Right cardiac atrium (tissue), 5 donors: ENCODE measurements at regions of chr2 and their contacts with region 1.

Region 1: DNA sequence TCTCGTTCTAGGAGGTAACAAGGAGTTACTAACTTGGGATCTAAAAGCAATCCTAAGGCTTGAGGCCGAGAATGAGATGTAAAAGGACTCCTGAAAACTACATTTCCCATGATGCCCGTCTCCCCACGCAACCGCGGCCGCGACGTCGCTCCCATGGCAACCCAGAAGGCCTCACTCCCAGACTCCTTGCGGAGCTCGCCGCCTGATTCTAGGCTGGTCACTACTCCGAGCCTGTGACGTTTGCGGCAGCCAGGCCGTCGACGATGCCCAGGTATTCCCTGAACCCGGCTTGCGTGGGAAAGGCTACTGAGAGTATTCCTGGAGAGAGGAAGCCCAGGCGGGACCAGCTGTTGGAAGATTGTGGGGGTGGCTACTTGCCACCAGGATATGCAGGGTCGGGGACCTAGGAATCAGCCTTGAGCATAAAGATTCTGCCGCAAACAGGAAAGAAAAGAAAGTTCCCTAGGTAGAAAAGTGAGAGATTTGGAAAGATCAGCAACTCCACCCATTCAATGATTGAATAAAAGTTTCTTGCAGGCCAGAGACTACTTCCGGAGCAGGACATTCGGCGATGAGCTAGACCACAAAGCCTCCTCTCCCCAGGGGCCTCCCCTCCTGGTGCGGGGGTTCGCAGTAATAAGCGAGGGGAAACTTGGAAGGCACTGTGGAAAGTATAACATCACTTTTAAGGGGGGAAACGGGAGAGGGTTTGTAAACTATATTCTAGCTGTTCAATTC is at the start of gene DYNC2LI1:
- DNase-seq: peak; percentile 83 to 96 (median 95)
- ATAC-seq: peak; percentile 99
- H3K4me3 ChIP-seq: peak within 1 kb of the TSS; percentile 99
- H3K27ac ChIP-seq: peak within 1 kb of the TSS; percentile 94
- H3K4me1 ChIP-seq: peaks cover 4% of the 10 kb centered on the region
- H3K27me3 ChIP-seq: no peaks in the 10 kb centered on the region
- total RNA-seq, gene DYNC2LI1: 5.7 to 14.8 (median 12.6) TPM

Region 2: GRCh38 chr2:43611987-43612894 is 161.8 kb before region 1 on chr2:
- intact Hi-C with region 1: loop called in 2 of 4 experiments (anchors 10 kb)
- DNase-seq: peak; percentile 60 to 86 (median 78)
- ATAC-seq: peak; percentile 89 to 91
- H3K4me3 ChIP-seq: no peak overlapping the region
- H3K27ac ChIP-seq: no peak overlapping the region
- H3K4me1 ChIP-seq: no peaks in the 10 kb centered on the region
- H3K27me3 ChIP-seq: no peaks in the 10 kb centered on the region